Right cardiac atrium (tissue), 5 donors: ENCODE measurements at regions of chr9 and their contacts with region 1.

Region 1: DNA sequence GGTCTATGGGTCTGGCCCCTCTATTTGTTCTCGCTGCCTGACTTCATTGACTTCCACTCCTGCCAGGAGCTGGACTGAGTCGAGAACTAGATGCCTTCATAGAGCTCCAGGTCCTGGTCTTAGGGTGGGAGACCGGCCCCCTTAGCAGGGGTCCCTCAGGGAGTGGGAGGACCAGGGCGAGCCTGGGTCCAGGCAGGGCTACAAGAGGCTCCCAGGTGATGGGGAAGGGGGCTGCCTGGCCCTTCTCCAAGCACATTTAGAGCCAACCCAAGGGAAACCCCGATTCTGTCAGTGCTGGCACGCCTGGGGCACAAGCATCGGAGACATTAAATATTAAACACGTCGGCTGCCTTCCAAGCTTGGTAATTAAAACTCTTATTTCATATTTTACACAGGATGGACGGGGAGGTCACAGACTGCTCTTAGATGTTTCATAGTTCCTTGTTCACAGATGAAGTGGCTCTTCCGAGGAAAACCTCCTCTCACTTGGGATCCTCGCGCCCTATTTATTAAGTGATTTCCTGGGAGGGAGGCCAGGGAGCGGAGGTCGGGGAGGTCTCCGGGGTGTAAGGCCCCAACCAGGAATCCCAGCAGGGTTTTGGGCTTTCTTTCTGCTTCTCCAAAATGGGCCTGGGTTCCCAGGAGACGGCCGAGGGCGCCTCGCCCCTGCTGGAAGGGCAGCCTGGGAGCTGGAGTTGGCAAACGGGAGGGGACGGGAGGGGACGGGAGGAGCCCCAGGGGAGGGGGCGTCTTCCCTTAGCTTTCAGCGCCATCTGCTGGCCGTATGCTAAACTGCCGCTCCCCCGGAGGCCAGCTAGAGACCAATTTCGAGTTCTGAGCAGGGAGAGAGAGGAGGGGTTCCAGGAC is 23.4 kb upstream of the ZBTB43 start:
- DNase-seq: peak; percentile 83 to 93 (median 93)
- ATAC-seq: peak; percentile 87 to 90
- H3K4me3 ChIP-seq: no peak overlapping the region
- H3K27ac ChIP-seq: no peak overlapping the region
- H3K4me1 ChIP-seq: no peaks in the 10 kb centered on the region
- H3K27me3 ChIP-seq: no peaks in the 10 kb centered on the region

Region 2: DNA sequence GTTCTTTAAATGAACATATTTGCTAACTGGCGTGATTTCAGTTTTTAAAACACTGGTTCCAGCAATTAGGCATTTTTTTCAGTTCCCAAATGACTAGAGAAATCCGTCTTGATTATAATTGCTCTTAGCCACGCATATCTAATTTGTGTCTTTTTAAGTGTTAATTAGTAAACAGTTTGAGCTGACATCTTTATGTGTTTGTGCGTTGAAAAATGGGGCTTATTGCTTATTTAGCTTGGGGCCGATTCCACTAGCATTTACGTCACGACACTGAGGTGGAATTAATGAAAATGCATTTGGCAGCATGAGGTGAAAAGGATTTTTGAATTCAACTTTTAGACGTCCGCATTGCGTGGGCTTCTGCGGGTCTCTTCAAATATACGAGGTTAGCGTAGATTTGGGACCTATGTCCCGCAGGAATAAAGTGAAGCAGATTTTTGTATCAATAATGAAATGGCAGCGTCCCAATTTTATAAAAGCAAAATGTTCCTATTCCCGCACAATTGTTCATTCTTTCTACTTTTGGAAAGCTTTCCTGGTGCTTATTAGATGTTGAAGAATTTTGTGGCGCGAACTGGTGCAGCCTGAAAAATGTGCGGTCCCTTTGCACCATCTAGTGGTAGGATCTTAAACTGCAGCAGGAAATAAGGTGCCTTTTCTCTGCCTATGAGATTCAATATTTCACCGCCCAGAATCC is 290.4 kb before region 1 on chr9:
- intact Hi-C with region 1: loop called in 1 of 4 experiments (anchors 10 kb)
- DNase-seq: peak in 2 of 3 donors; percentile 20 to 30
- ATAC-seq: no peak
- H3K4me3 ChIP-seq: no peak overlapping the region
- H3K27ac ChIP-seq: no peak overlapping the region
- H3K4me1 ChIP-seq: no peaks in the 10 kb centered on the region
- H3K27me3 ChIP-seq: no peaks in the 10 kb centered on the region

Region 3: DNA sequence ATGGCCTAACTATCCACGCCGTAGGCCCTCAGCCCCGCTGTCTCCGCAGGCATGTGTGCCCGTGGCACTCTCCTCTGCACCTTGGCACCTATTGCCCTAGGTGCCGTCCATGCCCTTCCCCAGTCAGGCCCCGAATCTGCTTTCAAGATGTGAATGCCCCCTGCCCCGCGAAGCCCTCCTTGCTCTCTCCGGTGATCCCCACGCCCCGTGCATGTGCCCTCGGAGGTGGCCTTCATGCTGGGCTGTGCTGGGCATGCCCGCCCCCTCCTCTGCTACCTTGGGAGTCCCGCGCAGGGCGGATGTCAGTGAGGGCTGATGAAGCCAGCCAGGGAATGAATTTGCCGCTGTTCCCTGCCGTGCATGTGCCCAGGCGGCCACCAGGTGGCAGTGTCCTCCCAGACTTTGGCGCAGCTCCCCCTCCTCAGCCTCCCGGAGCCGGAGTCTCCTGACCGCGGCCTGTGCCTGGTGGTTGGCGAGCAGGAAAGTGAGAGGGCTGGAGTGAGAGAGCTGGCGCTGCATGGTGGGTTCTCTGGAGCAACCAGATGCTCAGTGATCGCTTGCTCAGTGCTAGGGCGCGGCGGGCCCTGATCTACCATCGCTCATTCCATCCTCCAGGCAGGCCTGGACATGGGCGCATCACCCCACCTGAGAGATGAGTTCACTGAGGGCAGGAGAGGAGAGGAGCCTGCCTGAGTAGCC is 280.6 kb before region 1 on chr9:
- intact Hi-C with region 1: loop called (anchors 2 to 10 kb)
- DNase-seq: peak; percentile 79 to 92 (median 91)
- ATAC-seq: peak; percentile 74
- H3K4me3 ChIP-seq: no peak overlapping the region
- H3K27ac ChIP-seq: no peak overlapping the region
- H3K4me1 ChIP-seq: no peaks in the 10 kb centered on the region
- H3K27me3 ChIP-seq: no peaks in the 10 kb centered on the region

Region 4: DNA sequence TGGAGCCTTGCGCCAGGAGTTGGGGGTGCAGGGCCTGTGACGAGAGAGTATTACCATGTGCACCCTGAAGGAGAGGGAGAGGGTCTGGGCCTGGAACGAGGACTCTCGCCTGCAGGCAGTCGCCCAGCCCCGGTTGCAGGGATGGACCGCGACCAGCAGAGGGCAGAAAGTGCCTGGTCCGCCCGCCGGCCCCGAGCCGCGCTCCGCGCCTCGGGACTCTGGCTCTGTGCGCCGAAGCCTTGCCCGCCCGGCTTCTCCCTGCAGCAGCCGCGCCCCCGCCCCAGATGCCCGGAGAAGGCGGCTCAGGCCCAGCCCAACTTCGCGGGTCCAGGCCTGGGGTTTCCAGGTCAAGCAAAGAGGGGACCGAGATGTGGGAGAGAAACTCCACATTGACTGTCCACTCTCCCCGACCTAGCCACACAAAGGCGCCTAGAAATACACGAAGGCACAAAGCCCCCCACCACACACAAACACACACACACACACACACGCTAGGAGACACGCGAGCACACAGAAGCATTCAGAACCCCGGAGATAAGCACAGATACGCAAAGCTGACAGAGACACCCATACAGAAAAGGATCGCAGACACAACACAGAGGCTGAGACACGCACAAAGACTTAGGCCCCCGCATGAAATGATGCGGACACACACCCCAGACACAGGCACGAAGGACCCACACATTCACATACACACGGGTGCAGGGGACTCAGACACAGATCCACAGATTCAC is 169.7 kb before region 1 on chr9:
- intact Hi-C with region 1: loop called in 2 of 4 experiments (anchors 5 kb)
- DNase-seq: peak; percentile 82 to 94 (median 93)
- ATAC-seq: peak; percentile 71 to 80
- H3K4me3 ChIP-seq: no peak overlapping the region
- H3K27ac ChIP-seq: no peak overlapping the region
- H3K4me1 ChIP-seq: no peaks in the 10 kb centered on the region
- H3K27me3 ChIP-seq: no peaks in the 10 kb centered on the region

Region 5: DNA sequence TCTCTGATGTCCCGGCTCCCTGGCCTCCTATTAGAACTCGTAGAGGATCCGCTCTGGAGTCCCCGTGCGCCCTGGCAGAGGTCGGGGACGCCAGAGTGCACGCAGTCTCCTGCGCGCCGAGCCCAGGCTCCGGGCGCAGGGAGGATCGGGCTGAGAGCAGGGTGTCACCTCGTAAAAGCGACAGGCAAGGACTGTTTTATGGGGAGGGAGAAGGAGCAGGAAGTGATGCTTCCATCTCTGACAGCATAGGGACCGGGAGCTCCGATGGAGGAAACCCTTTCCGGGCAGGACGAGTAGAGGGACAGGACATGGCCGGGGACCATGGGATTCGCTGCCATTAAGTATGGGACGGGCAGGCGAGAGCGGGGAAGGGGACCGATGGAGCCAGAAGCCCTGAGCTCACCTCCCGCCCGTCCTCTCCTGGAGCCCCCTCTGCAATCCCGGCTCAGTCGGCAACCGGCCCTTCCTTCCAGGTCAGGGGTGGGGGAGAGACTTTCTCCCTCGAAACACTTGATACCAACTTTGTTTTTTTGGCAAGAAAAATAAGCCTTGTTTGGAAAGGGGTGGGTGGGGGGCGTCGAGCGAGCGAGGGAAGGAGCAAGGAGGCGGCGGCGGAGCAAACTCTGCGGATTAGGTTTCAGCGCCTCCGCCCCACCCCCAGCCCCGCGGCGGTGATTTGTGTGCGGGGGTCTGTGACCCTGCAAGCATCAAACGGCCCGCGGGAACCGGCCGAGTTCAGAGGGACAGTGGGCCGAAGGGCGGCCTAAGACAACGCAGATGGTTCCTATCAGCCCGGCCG is 155.1 kb before region 1 on chr9:
- intact Hi-C with region 1: loop called in 1 of 4 experiments (anchors 10 kb)
- DNase-seq: peak in 1 of 3 donors; percentile 51
- ATAC-seq: peak in 1 of 2 donors; percentile 34
- H3K4me3 ChIP-seq: peak overlapping the region; percentile 15
- H3K27ac ChIP-seq: no peak overlapping the region
- H3K4me1 ChIP-seq: no peaks in the 10 kb centered on the region
- H3K27me3 ChIP-seq: no peaks in the 10 kb centered on the region

Region 6: GRCh38 chr9:126704873-126705766 is 76.3 kb before region 1 on chr9:
- intact Hi-C with region 1: loop called (anchors 2 to 5 kb)
- DNase-seq: peak; percentile 77 to 92 (median 92)
- ATAC-seq: peak; percentile 57 to 74
- H3K4me3 ChIP-seq: no peak overlapping the region
- H3K27ac ChIP-seq: no peak overlapping the region
- H3K4me1 ChIP-seq: no peaks in the 10 kb centered on the region
- H3K27me3 ChIP-seq: no peaks in the 10 kb centered on the region

Region 7: DNA sequence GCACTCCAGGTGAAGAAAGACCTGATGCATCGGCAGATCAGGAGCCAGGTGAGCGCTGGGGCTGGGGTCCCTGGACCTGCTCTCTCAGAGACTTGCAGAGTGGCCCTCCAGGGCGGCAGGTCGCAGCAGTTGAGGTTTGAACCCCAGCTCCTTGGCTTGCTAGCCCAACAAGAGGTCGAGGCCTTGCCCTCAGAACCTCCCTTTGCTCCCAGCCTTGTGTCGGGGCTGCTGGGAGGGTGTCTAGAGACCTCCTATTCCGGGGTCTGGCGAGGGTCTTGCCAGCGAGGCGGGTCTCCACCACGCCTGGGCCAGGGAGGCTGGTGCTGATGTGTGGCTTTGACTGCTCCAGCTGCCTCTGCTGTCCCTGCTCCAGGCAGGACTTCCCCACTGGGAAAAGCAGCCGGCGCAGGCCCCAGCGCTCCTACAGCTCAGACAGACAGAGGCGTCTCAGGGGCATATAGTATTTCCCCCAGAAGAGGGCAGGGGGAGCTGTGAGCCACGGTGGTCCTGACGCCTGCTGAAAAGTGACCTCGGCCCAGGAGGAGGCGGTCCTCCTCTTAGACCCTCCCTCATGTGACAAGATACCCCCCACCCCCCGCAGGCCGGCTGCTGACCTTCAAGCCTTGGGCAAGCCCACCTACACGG is 708.2 kb after region 1 on chr9:
- intact Hi-C with region 1: no loop called
- DNase-seq: no peak
- ATAC-seq: no peak
- H3K4me3 ChIP-seq: no peak overlapping the region
- H3K27ac ChIP-seq: no peak overlapping the region
- H3K4me1 ChIP-seq: no peaks in the 10 kb centered on the region
- H3K27me3 ChIP-seq: no peaks in the 10 kb centered on the region